Adrenal gland (tissue), 19 donors: ENCODE measurements at regions of chr2 and their contacts with region 1.

Region 1: GRCh38 chr2:227655454-227655853 is 11.2 kb upstream of the SCYGR5 start:
- DNase-seq: peak; percentile 30 to 76 (median 63)
- H3K4me3 ChIP-seq: no peak overlapping the region
- H3K27ac ChIP-seq: no peak overlapping the region
- H3K4me1 ChIP-seq: peaks cover 0 to 8% of the 10 kb centered on the region in 2 donors
- H3K27me3 ChIP-seq: no peaks in the 10 kb centered on the region
- CTCF ChIP-seq: no peak
- POLR2A ChIP-seq: no peak

Region 2: GRCh38 chr2:227687189-227687588 is 31.7 kb after region 1 on chr2:
- intact Hi-C with region 1: no loop called
- DNase-seq: no peak
- H3K4me3 ChIP-seq: no peak overlapping the region
- H3K27ac ChIP-seq: no peak overlapping the region
- H3K4me1 ChIP-seq: no peaks in the 10 kb centered on the region
- H3K27me3 ChIP-seq: no peaks in the 10 kb centered on the region
- CTCF ChIP-seq: no peak
- POLR2A ChIP-seq: no peak

Region 3: GRCh38 chr2:227766373-227766883 is 111.0 kb after region 1 on chr2:
- intact Hi-C with region 1: loop called (anchors 5 to 10 kb)
- DNase-seq: peak; percentile 80 to 93 (median 87)
- H3K4me3 ChIP-seq: no peak overlapping the region
- H3K27ac ChIP-seq: no peak overlapping the region
- H3K4me1 ChIP-seq: peaks cover 4 to 6% of the 10 kb centered on the region in 2 donors
- H3K27me3 ChIP-seq: no peaks in the 10 kb centered on the region
- CTCF ChIP-seq: peak; percentile 79 to 93 (median 90)
- POLR2A ChIP-seq: no peak